Naive thymus-derived CD4-positive, alpha-beta T cell (primary cell): ENCODE measurements at regions of chr6 and their contacts with region 1.

Region 1: DNA sequence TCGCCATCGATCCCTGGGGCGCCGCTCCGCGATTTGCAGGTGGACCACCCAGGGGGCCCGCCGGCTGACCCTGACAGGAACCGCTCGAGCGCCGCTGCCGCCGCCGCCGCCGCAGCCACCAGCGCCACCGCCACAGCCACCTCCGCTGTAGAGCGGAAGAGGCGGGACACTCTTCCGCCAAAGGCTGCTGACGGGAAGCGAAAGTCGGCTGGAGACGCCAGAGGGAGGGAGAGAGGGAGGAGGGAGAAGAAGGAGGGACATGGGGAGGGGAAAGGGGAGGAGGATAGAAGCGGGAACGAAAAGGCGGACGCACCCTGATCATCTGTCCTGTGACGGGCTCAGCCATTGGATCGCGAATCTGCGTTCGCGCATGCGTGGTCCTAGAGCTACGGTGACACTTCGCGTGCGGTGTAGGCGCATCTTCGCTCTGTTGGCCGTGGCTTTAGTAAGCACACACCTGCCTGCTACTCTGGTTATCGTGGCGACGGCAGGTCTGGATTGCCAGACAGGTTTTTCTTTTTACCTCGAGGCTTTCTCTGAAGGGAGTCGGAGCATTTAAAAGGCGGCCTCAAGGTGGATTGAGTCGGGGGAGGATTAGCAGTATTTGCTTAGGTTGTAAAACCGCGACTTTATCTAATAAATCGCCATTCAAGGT is at the start of gene TMEM30A:
- DNase-seq: peak; percentile 87 to 97 (median 96)
- ATAC-seq: peak; percentile 99
- H3K4me3 ChIP-seq: peak within 1 kb of the TSS; percentile 85
- H3K4me3 Mint-ChIP-seq: no peak within 1 kb of the TSS
- H3K27ac ChIP-seq: peak within 1 kb of the TSS; percentile 88
- H3K27ac Mint-ChIP-seq: no peak within 1 kb of the TSS
- H3K4me1 ChIP-seq: peaks cover 21 to 24% of the 10 kb centered on the region in 2 donors
- H3K4me1 Mint-ChIP-seq: peaks cover 3 to 53% (median 44%) of the 10 kb centered on the region in 7 donors
- H3K27me3 ChIP-seq: no peaks in the 10 kb centered on the region
- H3K27me3 Mint-ChIP-seq: no peaks in the 10 kb centered on the region
- total RNA-seq, gene TMEM30A: 36.2 to 91.4 (median 61.1) TPM

Region 2: DNA sequence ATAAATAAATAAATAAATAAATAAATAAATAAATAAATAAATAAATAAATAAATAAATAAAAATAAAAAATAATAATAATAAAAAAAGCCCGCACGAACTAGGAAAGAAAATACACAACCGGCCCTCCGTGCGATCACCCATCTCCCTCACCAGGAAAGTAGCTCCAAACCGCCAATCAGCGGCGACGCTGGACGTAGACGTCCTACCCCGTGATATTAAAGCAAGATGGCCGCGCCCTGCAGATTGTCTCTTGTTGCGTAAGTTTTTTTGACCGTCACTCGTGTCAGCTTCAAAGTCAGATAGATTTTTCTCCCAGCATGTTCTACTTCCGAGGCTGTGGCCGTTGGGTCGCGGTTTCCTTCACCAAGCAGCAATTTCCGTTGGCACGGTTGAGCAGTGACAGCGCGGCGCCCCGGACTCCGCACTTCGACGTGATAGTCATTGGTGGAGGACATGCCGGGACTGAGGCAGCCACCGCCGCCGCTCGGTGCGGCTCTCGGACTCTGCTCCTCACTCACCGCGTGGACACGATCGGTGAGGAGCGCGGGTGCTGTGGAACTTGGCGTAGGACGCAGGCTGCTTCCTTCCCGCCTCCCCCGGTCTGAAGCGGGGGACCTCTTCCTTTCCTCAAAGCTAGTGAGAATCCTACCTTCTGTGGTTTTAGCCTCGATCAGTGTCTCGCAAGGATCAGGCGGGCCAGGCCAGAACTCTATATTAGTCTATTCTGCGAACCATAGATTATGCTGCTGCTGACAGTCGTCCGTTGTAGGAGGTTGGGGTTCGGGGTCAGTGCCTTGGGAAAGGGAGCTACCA is 1823.0 kb before region 1 on chr6 and contains the start of gene MTO1:
- CTCF ChIA-PET with region 1: no interaction called
- POLR2A ChIA-PET with region 1: no interaction called
- intact Hi-C with region 1: loop called in 1 of 2 experiments (anchors 2 kb)
- DNase-seq: peak; percentile 50 to 86 (median 81)
- ATAC-seq: peak; percentile 97
- H3K4me3 ChIP-seq: peak within 1 kb of the TSS; percentile 92
- H3K4me3 Mint-ChIP-seq: peak within 1 kb of the TSS; percentile 87 to 100 (median 98)
- H3K27ac ChIP-seq: peak within 1 kb of the TSS; percentile 93
- H3K27ac Mint-ChIP-seq: peak within 1 kb of the TSS; percentile 96 to 100 (median 98)
- H3K4me1 ChIP-seq: peaks cover 0 to 8% of the 10 kb centered on the region in 2 donors
- H3K4me1 Mint-ChIP-seq: peaks cover 11 to 53% (median 32%) of the 10 kb centered on the region in 7 donors
- H3K27me3 ChIP-seq: no peaks in the 10 kb centered on the region
- H3K27me3 Mint-ChIP-seq: no peaks in the 10 kb centered on the region
- total RNA-seq, gene MTO1: 43.5 to 92.0 (median 48.6) TPM

Region 3: DNA sequence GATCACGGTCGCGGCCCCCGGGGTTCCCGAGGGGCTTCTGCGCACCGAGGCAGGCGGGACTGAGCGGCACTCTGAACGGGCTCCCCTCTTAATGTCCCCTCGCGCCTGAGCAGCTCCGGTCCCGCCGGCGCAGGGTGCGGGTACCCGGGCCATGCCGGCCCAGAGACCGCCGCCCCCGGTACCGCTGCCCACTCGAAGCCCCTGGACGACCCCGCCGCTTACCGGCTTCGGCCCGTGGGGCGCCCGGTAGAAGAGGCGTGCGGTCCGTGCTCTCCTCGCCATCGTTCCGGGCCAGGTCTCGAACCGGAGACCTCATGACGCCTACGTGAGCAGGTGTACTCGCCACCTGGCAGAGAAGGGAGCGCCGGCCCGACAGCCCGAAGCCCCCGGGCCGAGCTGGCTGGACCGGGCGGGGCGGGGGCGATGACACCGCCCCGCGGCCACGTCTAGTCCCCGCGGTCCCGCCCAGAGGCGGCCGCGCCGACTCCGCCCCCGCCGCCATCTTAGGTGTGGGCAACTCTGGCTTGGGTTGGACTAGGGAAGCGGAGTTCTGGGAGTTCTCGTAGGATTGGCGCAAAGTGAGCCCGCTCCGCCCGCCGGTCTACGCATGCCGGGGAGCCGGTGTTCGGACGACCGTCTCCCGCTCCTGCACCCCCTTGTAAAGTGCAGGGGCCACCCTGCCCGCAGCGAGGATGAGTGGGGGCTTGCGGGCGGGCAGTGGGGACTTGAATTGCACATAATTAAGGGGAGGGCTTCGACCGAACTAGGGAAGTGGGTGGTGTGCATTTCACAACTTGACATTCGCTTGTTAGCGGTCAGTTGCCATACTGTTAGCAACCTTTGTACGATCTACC is 1631.0 kb before region 1 on chr6 and contains the start of gene SLC17A5:
- CTCF ChIA-PET with region 1: no interaction called
- POLR2A ChIA-PET with region 1: interaction called, 3 read pairs
- intact Hi-C with region 1: loop called (anchors 1 kb)
- DNase-seq: peak; percentile 76 to 89 (median 82)
- ATAC-seq: peak; percentile 95
- H3K4me3 ChIP-seq: peak within 1 kb of the TSS; percentile 99
- H3K4me3 Mint-ChIP-seq: peak within 1 kb of the TSS; percentile 95 to 100 (median 98)
- H3K27ac ChIP-seq: peak within 1 kb of the TSS; percentile 99
- H3K27ac Mint-ChIP-seq: peak within 1 kb of the TSS; percentile 90 to 99 (median 97)
- H3K4me1 ChIP-seq: peaks cover 10 to 13% of the 10 kb centered on the region in 2 donors
- H3K4me1 Mint-ChIP-seq: peaks cover 17 to 42% (median 37%) of the 10 kb centered on the region in 7 donors
- H3K27me3 ChIP-seq: no peaks in the 10 kb centered on the region
- H3K27me3 Mint-ChIP-seq: no peaks in the 10 kb centered on the region
- total RNA-seq, gene SLC17A5: 6.0 to 13.8 (median 8.9) TPM

Region 4: DNA sequence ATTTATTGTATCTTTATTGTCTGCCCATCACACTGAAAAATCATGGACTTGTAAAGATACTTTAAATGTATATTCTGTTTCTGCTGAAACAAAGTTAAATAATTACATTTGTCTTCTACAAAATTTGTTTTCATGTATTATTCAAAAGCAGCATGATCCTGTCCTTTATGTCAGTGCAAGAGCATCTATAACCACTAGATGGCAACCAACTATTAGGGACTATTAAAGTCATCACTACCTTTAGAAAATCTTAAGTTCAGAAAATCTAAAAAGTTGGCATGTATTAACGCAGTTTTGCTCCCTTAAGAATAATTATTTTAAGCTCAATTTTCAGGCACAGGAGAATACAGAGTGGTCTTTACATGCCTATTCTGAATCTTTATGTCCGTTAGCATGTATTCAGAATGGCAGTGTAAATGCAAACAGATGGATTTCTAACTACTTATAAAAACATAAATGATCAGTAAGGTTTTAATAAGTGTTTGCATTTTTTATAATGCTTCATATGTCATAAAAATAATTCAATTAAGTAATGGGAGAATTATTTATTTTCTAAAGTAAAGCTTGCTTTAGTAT is 18.0 kb before region 1 on chr6:
- CTCF ChIA-PET with region 1: interaction called, 9 read pairs
- POLR2A ChIA-PET with region 1: interaction called, 3 read pairs
- intact Hi-C with region 1: loop called (anchors 1 kb)
- DNase-seq: peak in 7 of 9 donors; percentile 11 to 43 (median 27)
- ATAC-seq: peak; percentile 78
- H3K4me3 ChIP-seq: no peak overlapping the region
- H3K4me3 Mint-ChIP-seq: no peak overlapping the region
- H3K27ac ChIP-seq: no peak overlapping the region
- H3K27ac Mint-ChIP-seq: peak overlapping the region in 1 of 9 donors; percentile 32
- H3K4me1 ChIP-seq: peaks cover 0 to 5% of the 10 kb centered on the region in 2 donors
- H3K4me1 Mint-ChIP-seq: peaks cover 0 to 52% (median 41%) of the 10 kb centered on the region in 7 donors
- H3K27me3 ChIP-seq: no peaks in the 10 kb centered on the region
- H3K27me3 Mint-ChIP-seq: no peaks in the 10 kb centered on the region

Region 5: GRCh38 chr6:75296811-75297779 is 12.3 kb after region 1 on chr6:
- CTCF ChIA-PET with region 1: interaction called, 5 read pairs
- POLR2A ChIA-PET with region 1: interaction called, 5 read pairs
- intact Hi-C with region 1: loop called (anchors 1 kb)
- DNase-seq: peak in 7 of 9 donors; percentile 16 to 65 (median 46)
- ATAC-seq: peak; percentile 75
- H3K4me3 ChIP-seq: no peak overlapping the region
- H3K4me3 Mint-ChIP-seq: no peak overlapping the region
- H3K27ac ChIP-seq: no peak overlapping the region
- H3K27ac Mint-ChIP-seq: no peak overlapping the region
- H3K4me1 ChIP-seq: no peaks in the 10 kb centered on the region
- H3K4me1 Mint-ChIP-seq: peaks cover 0 to 2% (median 0%) of the 10 kb centered on the region in 7 donors
- H3K27me3 ChIP-seq: no peaks in the 10 kb centered on the region
- H3K27me3 Mint-ChIP-seq: peaks cover 0 to 2% (median 0%) of the 10 kb centered on the region in 5 donors

Region 6: DNA sequence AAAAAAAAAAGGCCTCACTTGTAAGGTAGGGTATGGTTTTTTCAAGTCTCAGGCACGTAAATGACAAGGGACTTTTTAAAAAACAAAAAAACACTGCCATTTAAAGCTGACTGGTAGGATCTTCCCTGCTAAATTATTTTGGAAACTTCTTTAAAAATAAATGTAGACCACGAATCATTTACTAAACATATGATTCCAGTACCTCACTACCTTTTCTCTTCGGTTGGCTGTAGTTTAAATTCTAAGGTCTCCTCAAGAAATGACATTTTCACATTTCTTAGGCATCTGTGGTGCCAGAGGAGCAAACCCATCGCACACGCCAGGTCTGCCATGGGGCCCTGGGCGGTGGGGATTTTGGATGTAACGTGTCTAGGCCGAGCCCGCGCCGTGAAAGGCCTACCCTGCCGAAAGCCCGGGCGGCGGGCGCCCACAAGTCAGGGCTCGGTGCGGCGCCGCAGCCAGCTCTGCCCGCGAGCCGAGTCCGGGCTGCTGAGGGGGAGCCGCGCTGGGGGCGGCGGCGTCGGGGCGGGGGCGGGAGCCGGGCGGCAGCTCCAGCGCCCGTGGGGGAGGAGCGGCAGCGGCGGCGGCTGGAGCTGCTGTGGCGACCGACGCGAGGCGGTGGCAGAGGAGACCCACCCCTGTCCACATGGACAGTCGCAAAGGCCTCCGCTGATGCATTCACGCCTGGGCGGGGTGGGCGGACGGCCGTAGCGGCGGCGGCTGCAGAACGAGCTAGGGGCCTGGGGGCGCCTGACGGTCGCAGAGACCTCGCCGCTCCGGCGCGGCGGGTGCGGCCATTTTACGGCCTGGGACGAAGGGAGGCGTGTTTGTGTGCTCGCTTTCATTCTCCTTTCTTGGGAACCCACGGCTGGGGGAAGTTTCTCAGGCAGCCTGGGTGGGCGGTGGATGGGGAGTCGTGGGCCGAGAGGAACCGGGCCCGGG is 316.8 kb after region 1 on chr6 and contains the start of gene SENP6:
- CTCF ChIA-PET with region 1: no interaction called
- POLR2A ChIA-PET with region 1: interaction called, 16 read pairs
- intact Hi-C with region 1: loop called (anchors 1 kb)
- DNase-seq: peak; percentile 68 to 81 (median 79)
- ATAC-seq: peak; percentile 80
- H3K4me3 ChIP-seq: peak within 1 kb of the TSS; percentile 87
- H3K4me3 Mint-ChIP-seq: peak within 1 kb of the TSS; percentile 78 to 100 (median 99)
- H3K27ac ChIP-seq: peak within 1 kb of the TSS; percentile 97
- H3K27ac Mint-ChIP-seq: peak within 1 kb of the TSS; percentile 97 to 99 (median 98)
- H3K4me1 ChIP-seq: peaks cover 26 to 37% of the 10 kb centered on the region in 2 donors
- H3K4me1 Mint-ChIP-seq: peaks cover 44 to 80% (median 72%) of the 10 kb centered on the region in 7 donors
- H3K27me3 ChIP-seq: no peaks in the 10 kb centered on the region
- H3K27me3 Mint-ChIP-seq: no peaks in the 10 kb centered on the region
- total RNA-seq, gene SENP6: 77.9 to 132 (median 124) TPM